SK-N-SH (cell line): ENCODE measurements at regions of chr16 and their contacts with region 1.

Region 1: DNA sequence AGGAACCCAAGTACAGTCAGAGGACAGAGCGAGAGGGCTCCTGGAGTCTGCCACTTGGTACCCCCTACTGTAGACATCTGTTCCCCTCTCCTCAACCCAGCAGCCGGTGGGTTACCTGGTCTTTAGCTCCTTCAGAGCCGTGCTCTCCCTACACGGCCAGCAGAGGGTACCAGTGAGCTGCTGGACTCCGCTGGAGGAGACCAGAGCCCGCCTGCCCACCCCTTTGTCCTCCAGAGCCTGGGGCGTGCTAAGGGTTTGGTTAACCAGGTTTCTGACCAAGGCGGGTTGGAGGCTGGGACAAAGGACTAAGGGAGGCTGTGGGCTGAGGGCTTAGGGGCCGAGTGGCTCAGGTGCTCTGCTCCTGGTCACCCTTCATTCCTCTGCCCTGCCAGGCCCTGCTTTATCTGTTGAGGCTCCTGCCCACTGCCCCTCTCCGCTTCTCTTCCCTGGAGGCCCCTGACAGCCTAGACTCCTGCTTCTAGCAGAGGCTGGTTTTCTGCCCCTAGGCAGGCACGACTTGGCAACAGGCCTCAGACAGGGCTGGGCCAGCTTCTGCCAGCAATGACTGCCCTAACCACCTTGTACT is 2.7 kb upstream of the HSD11B2 start:
- DNase-seq: peak; percentile 82
- H3K4me3 ChIP-seq: no peak overlapping the region
- H3K27ac ChIP-seq: no peak overlapping the region
- H3K4me1 ChIP-seq: peaks cover 0 to 12% of the 10 kb centered on the region in 2 experiments; a peak in 1 of 4 replicates
- H3K27me3 ChIP-seq: no peaks in the 10 kb centered on the region; the same call in 1 of the 2 replicates
- CTCF ChIP-seq: peak; percentile 70
- EP300 ChIP-seq: no peak
- RAD21 ChIP-seq: peak; percentile 75

Region 2: DNA sequence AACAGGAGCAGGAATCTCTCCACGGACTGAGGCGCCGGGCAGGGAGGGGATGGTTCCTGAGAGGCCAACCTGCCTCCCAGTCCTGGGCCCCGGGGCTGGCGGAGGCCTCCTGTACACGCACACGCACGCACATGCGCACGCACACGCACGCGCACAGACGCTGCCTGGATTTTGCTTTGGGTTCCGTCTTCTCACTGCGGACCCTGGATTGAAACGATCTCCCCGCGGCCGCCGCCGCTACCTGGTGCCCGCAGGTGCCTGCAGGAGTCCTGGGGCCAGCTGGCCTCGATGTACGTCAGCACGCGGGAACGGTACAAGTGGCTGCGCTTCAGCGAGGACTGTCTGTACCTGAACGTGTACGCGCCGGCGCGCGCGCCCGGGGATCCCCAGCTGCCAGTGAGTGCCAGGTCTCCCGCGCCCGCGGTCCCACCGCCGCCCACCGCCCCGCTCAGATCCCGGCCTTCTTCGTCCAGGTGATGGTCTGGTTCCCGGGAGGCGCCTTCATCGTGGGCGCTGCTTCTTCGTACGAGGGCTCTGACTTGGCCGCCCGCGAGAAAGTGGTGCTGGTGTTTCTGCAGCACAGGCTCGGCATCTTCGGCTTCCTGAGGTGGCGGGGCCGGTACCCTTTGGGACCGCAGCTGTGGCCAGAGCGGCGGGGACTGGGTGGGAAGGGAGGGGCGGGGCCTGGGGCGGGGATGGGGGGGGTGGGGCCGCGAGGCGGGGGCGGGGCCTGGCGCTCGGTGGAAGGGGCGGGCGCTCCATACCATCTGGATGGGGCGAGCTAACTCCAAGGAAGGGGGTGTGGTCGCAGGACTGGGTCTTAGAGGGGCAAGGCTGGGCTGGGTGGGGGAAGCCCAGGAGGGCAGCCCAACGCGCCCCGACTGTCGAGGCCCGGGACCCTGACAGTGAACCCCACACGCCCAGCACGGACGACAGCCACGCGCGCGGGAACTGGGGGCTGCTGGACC is 427.6 kb before region 1 on chr16:
- CTCF ChIA-PET with region 1: no interaction called
- POLR2A ChIA-PET with region 1: no interaction called
- DNase-seq: peak; percentile 97
- H3K4me3 ChIP-seq: peak overlapping the region; percentile 51 to 58
- H3K27ac ChIP-seq: no peak overlapping the region; a peak in 1 of 4 replicates
- H3K4me1 ChIP-seq: peaks cover 0 to 13% of the 10 kb centered on the region in 2 experiments; a peak in 1 of 4 replicates
- H3K27me3 ChIP-seq: no peaks in the 10 kb centered on the region
- CTCF ChIP-seq: no peak
- EP300 ChIP-seq: no peak
- RAD21 ChIP-seq: no peak

Region 3: GRCh38 chr16:67146523-67147357 is 281.5 kb before region 1 on chr16:
- CTCF ChIA-PET with region 1: no interaction called
- POLR2A ChIA-PET with region 1: no interaction called
- DNase-seq: no peak
- H3K4me3 ChIP-seq: no peak overlapping the region
- H3K27ac ChIP-seq: no peak overlapping the region
- H3K4me1 ChIP-seq: peaks cover 0 to 7% of the 10 kb centered on the region in 2 experiments; a peak in 1 of 4 replicates
- H3K27me3 ChIP-seq: no peaks in the 10 kb centered on the region
- CTCF ChIP-seq: no peak; the same call in 1 of the 2 replicates
- EP300 ChIP-seq: no peak
- RAD21 ChIP-seq: 0 out of 2 replicates have a peak, but pooled peaks have one; percentile 12

Region 4: DNA sequence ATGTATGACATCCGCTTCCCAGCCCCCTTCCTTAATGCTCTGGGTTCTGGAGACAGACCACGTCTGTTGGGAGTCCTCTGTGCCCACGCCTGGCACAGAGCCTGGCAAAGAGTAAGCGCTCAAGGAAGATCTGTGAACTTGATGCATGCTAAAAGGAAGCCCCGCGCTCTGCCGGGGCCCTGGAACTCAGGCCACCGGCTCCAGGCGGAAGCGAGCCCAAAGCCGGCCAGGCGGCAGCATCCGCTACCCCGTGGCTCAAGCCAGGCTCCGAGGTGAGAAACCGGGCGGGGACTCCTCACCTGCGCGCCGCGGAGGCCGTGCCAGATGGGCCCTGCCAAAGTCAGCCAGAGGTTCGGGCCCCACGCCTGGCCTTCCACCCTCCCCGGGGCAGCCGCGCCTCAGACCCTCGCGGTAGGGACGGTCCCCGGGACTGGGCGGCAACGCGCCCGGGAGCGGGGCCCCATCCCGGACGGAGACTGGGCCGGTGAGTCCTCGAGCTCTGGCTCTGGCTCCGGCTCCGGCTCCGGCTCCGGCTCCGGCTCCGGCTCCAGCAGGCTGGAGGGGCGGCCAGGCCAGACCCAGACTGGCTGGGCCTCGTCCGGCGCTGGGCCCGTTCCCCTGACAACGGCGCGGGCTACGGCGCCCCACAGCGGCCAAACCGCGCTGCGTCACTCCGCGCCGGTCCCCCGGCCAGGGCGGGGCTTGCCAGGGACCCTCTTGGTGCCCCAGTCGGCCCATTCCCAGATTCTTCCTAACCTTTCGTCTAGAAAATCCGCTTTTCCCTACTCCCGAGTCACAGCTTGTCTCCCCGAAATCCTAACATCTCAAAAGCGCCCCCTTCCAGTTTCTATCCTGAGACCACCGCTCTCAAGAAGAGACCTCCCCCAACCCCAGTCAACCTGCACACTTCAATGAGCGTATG is 12.1 kb before region 1 on chr16 and contains the start of gene ZDHHC1:
- CTCF ChIA-PET with region 1: interaction called, 75 read pairs
- POLR2A ChIA-PET with region 1: no interaction called
- DNase-seq: peak; percentile 96
- H3K4me3 ChIP-seq: peak within 1 kb of the TSS; percentile 64 to 66
- H3K27ac ChIP-seq: peak within 1 kb of the TSS; percentile 53 to 79
- H3K4me1 ChIP-seq: no peaks in the 10 kb centered on the region; a peak in 1 of 4 replicates
- H3K27me3 ChIP-seq: no peaks in the 10 kb centered on the region
- CTCF ChIP-seq: peak; percentile 56
- EP300 ChIP-seq: no peak
- RAD21 ChIP-seq: peak; percentile 70
- polyA plus RNA-seq, gene ZDHHC1: 14.2 and 15.8 TPM in 2 replicates

Region 5: DNA sequence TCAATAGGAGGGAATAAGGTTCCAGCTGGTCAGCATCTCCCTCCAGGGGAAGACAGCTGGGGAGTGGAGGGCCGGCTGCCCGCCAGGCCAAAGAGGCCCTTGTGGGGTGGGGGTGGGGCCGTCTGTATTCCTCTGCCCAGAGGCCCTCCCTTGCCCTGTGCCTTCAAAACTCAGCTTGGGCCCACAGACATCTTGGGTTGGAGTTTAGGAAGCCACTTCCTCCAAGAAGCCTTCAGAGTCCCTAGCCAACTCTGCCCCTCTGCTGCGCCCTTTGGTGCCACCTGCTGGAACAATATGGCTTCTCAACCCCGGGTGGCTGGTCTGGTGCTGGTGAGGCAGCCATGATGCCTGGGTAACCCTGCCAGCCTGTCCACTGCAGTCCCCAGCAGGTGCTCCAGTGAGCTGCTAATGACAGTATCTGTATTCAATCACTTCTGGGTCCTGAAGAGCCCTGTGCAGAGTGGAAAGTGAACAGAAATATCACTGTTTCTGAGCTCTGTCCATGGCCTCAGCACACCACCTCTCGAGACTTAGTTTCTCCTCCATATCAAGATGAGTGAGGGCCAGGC is 19.4 kb after region 1 on chr16:
- CTCF ChIA-PET with region 1: interaction called, 31 read pairs
- POLR2A ChIA-PET with region 1: interaction called, 4 read pairs
- DNase-seq: peak; percentile 70
- H3K4me3 ChIP-seq: no peak overlapping the region
- H3K27ac ChIP-seq: no peak overlapping the region
- H3K4me1 ChIP-seq: peaks cover 0 to 32% of the 10 kb centered on the region in 2 experiments; a peak in 1 of 4 replicates
- H3K27me3 ChIP-seq: no peaks in the 10 kb centered on the region
- CTCF ChIP-seq: peak; percentile 55
- EP300 ChIP-seq: no peak
- RAD21 ChIP-seq: peak; percentile 44; the same call in 1 of the 2 replicates

Region 6: GRCh38 chr16:67480833-67481560 is 52.8 kb after region 1 on chr16 and contains the start of gene ATP6V0D1:
- CTCF ChIA-PET with region 1: interaction called, 10 read pairs
- POLR2A ChIA-PET with region 1: no interaction called
- DNase-seq: peak; percentile 98
- H3K4me3 ChIP-seq: peak within 1 kb of the TSS; percentile 80 to 100
- H3K27ac ChIP-seq: peak within 1 kb of the TSS; percentile 89 to 91
- H3K4me1 ChIP-seq: peaks cover 6 to 19% of the 10 kb centered on the region in 2 experiments; a peak in 1 of 4 replicates
- H3K27me3 ChIP-seq: no peaks in the 10 kb centered on the region
- CTCF ChIP-seq: peak; percentile 79
- EP300 ChIP-seq: no peak
- RAD21 ChIP-seq: peak; percentile 68
- polyA plus RNA-seq, gene ATP6V0D1: 111 and 135 TPM in 2 replicates